ENCODE measurements at regions of chr2 and their contacts with region 1.

Region 1: DNA sequence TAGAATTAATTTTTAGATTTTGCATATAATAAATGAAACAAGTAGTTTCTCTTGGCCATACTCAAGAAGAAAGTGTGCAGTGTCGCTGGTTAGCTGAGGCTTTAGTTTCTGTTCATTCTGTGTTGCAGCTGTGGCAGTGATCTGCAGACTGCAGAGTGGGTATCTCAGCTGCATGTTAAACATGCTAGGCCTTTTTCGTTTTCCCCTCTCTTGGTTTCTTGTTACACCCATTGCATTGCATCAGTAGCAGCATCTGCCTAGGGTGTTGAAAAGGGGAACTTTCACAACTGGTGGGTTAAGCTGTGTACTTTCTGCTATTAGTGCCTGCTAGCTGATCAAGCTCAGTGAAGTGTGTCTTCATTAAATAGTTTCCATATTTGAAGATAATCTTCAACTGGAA is 51.3 kb downstream of the ACSL3 start:
- DNase-seq: peak; percentile 92
- ATAC-seq: peak; percentile 96
- H3K4me3 ChIP-seq: peak overlapping the region; percentile 44; the same call in 1 of the 2 replicates
- H3K27ac ChIP-seq: peak overlapping the region; percentile 96
- H3K4me1 ChIP-seq: peaks cover 23% of the 10 kb centered on the region
- H3K27me3 ChIP-seq: no peaks in the 10 kb centered on the region
- CTCF ChIP-seq: no peak
- EP300 ChIP-seq: peak; percentile 58 to 88; a peak in 3 of 4 replicates
- POLR2A ChIP-seq: peak; percentile 75
- RAD21 ChIP-seq: no peak

Region 2: GRCh38 chr2:222169346-222169745 is 742.8 kb before region 1 on chr2:
- CTCF ChIA-PET with region 1: no interaction called
- POLR2A ChIA-PET with region 1: no interaction called
- RAD21 ChIA-PET with region 1: no interaction called
- SMC1A ChIA-PET with region 1: no interaction called
- in situ Hi-C with region 1: no loop called
- intact Hi-C with region 1: no loop called
- DNase-seq: no peak
- ATAC-seq: no peak
- H3K4me3 ChIP-seq: no peak overlapping the region
- H3K27ac ChIP-seq: no peak overlapping the region
- H3K4me1 ChIP-seq: no peaks in the 10 kb centered on the region
- H3K27me3 ChIP-seq: no peaks in the 10 kb centered on the region
- CTCF ChIP-seq: no peak
- EP300 ChIP-seq: no peak
- POLR2A ChIP-seq: no peak
- RAD21 ChIP-seq: no peak

Region 3: GRCh38 chr2:222690564-222691200 is 221.4 kb before region 1 on chr2:
- CTCF ChIA-PET with region 1: interaction called, 12 read pairs
- POLR2A ChIA-PET with region 1: no interaction called
- RAD21 ChIA-PET with region 1: interaction called, 4 read pairs
- SMC1A ChIA-PET with region 1: interaction called, 5 read pairs
- in situ Hi-C with region 1: no loop called
- intact Hi-C with region 1: no loop called
- DNase-seq: no peak
- ATAC-seq: peak; percentile 99
- H3K4me3 ChIP-seq: no peak overlapping the region
- H3K27ac ChIP-seq: no peak overlapping the region
- H3K4me1 ChIP-seq: no peaks in the 10 kb centered on the region
- H3K27me3 ChIP-seq: no peaks in the 10 kb centered on the region
- CTCF ChIP-seq: peak; percentile 99 to 100 (median 100); a peak in 5 of 6 replicates
- EP300 ChIP-seq: no peak
- POLR2A ChIP-seq: no peak
- RAD21 ChIP-seq: peak; percentile 93

Region 4: GRCh38 chr2:222797261-222797660 is 114.9 kb before region 1 on chr2:
- CTCF ChIA-PET with region 1: interaction called, 14 read pairs
- POLR2A ChIA-PET with region 1: interaction called, 5 read pairs
- RAD21 ChIA-PET with region 1: no interaction called
- SMC1A ChIA-PET with region 1: interaction called, 3 read pairs
- in situ Hi-C with region 1: no loop called
- intact Hi-C with region 1: no loop called
- DNase-seq: no peak
- ATAC-seq: peak; percentile 70; the same call in 2 of the 3 replicates
- H3K4me3 ChIP-seq: no peak overlapping the region
- H3K27ac ChIP-seq: no peak overlapping the region
- H3K4me1 ChIP-seq: no peaks in the 10 kb centered on the region
- H3K27me3 ChIP-seq: no peaks in the 10 kb centered on the region
- CTCF ChIP-seq: peak; percentile 38 to 49 (median 49); a peak in 5 of 6 replicates
- EP300 ChIP-seq: no peak
- POLR2A ChIP-seq: no peak
- RAD21 ChIP-seq: peak; percentile 67

Region 5: DNA sequence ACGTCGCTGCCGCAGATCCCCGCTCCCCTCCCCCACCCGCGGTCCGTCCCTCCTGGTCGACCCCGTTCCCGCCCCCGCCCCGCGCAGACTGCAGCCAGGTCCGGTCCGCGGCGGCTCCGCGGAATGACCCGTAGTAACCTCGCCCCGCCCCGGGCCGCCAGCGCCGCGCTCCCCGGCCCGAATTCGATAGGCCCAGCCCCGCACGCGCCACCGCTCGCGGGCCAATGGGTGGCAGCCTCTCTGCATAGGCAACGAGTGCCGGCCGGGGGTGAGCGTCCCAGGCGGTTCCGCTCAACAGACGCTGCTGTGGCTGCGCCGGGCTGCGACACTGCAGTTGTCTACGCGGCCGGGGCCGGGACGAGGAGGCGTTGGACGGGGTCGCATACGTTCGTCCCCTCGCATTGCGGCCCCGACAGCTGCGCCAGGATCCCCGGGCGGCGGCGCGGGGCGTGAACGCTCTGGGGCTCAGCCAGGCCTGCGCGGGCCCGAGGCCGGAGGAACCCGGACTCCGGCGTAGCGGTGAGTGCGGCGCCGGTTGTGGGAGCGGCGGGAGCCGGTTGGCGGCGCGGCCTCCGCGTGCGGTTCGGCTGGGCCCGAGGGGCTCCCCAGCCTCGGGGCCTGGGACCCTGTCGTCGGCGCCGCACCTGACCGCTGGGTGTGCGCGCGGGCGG is 51.2 kb before region 1 on chr2 and contains the start of gene ACSL3:
- CTCF ChIA-PET with region 1: interaction called, 20 read pairs
- POLR2A ChIA-PET with region 1: interaction called, 30 read pairs
- RAD21 ChIA-PET with region 1: interaction called, 42 read pairs
- SMC1A ChIA-PET with region 1: interaction called, 21 read pairs
- in situ Hi-C with region 1: no loop called
- intact Hi-C with region 1: loop called (anchors 2 kb)
- DNase-seq: peak; percentile 66
- ATAC-seq: peak; percentile 98
- H3K4me3 ChIP-seq: peak within 1 kb of the TSS; percentile 67
- H3K27ac ChIP-seq: peak within 1 kb of the TSS; percentile 74
- H3K4me1 ChIP-seq: peaks cover 6% of the 10 kb centered on the region
- H3K27me3 ChIP-seq: no peaks in the 10 kb centered on the region
- CTCF ChIP-seq: no peak; a peak in 1 of 6 replicates
- EP300 ChIP-seq: no peak
- POLR2A ChIP-seq: peak; percentile 100
- RAD21 ChIP-seq: no peak
- polyA plus RNA-seq, gene ACSL3: 15.6 to 24.0 TPM

Region 6: GRCh38 chr2:222950638-222951285 is 38.6 kb after region 1 on chr2:
- CTCF ChIA-PET with region 1: interaction called, 10 read pairs
- POLR2A ChIA-PET with region 1: interaction called, 3 read pairs
- RAD21 ChIA-PET with region 1: interaction called, 3 read pairs
- SMC1A ChIA-PET with region 1: interaction called, 3 read pairs
- in situ Hi-C with region 1: no loop called
- intact Hi-C with region 1: no loop called
- DNase-seq: no peak
- ATAC-seq: no peak
- H3K4me3 ChIP-seq: no peak overlapping the region
- H3K27ac ChIP-seq: no peak overlapping the region
- H3K4me1 ChIP-seq: no peaks in the 10 kb centered on the region
- H3K27me3 ChIP-seq: no peaks in the 10 kb centered on the region
- CTCF ChIP-seq: no peak
- EP300 ChIP-seq: no peak
- POLR2A ChIP-seq: no peak
- RAD21 ChIP-seq: no peak